ENCODE measurements at regions of chr1 and their contacts with region 1.

Region 1: DNA sequence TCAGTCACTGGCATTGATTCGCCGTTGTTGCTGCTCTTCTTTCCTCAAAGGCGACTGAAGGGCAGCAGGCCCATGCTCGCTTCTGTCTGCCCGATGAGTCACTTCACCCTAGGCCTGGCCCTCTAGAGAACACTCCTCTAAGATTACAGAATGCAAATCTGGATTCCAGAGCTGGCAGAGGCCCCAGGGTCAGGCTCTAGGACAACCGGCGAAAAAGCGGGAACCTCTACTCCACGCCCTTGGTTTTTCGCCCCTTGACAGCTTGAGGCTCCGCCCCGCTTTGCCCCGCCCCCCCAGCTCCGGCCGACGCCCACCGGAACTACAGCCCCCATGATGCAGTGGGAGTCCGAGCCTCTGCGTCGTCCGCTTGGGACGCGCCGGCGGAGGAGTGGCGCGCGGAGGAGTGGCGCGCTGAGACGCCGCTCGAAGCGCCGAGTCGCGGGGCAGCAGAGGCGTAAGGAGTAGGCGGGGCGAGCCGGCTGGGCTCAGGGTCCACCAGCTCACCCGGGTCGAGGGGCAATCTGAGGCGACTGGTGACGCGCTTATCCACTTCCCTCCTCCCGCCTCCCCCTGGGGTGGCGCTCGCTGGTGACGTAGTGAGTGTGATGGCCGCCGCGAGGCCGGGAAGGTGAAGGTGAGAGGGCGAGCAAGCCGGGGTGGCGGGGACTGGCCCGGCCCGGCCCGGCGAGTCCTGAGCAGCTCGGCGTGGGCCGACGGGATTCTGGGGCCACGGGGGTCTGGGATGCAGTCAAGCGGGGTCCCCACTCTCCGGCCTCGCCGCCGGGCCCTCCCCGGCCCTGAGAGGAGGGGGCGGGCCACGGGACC is at the start of gene MFN2:
- DNase-seq: peak; percentile 90
- H3K4me3 ChIP-seq: peak within 1 kb of the TSS; percentile 53 to 79
- H3K27ac ChIP-seq: peak within 1 kb of the TSS; percentile 89 to 91
- H3K4me1 ChIP-seq: peaks cover 13% of the 10 kb centered on the region
- H3K27me3 ChIP-seq: no peaks in the 10 kb centered on the region
- CTCF ChIP-seq: peak in 1 of 4 experiments; percentile 21
- POLR2A ChIP-seq: peak; percentile 57
- total RNA-seq, gene MFN2: 55.0 to 92.4 TPM

Region 2: DNA sequence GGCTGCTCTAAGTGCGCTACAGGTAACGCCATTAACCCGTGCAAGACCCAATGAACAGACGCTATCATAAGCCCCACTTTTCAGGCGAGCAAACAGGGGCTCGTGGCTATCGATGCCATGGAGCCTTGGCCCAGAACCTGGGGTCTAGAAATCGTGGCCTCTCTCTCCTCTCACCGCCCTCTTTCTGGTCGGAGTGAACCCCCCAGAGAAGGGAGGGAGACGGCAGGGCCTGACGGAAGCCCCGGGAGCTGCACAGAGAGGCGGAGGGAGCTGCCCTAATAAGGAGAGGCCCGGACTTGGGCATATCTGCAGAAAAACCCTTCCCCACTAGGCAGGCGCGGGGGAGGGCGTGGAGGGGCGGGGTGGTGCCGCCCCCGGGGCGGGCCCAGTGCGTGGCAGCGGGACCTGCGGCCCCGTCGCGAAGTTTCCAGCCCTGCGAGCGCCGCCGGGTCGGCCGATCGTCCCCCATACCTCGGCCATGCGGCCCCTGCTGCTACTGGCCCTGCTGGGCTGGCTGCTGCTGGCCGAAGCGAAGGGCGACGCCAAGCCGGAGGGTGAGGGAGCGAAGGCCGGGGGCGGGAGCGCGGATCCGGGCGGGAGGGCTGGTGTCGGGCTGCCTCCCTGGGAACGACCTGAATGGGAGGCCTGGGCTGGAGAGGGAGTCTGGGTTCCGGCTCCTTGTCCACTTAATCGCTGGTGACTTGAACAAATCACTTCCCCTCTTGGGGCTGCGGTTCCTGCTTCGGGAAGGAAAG is 45.6 kb before region 1 on chr1 and contains the start of gene PLOD1:
- intact Hi-C with region 1: loop called (anchors 5 kb)
- DNase-seq: peak; percentile 78
- H3K4me3 ChIP-seq: peak within 1 kb of the TSS; percentile 55 to 79
- H3K27ac ChIP-seq: peak within 1 kb of the TSS; percentile 72 to 90
- H3K4me1 ChIP-seq: no peaks in the 10 kb centered on the region
- H3K27me3 ChIP-seq: no peaks in the 10 kb centered on the region
- CTCF ChIP-seq: peak in 1 of 4 experiments; percentile 16
- POLR2A ChIP-seq: peak; percentile 81
- total RNA-seq, gene PLOD1: 73.6 to 80.2 TPM

Region 3: DNA sequence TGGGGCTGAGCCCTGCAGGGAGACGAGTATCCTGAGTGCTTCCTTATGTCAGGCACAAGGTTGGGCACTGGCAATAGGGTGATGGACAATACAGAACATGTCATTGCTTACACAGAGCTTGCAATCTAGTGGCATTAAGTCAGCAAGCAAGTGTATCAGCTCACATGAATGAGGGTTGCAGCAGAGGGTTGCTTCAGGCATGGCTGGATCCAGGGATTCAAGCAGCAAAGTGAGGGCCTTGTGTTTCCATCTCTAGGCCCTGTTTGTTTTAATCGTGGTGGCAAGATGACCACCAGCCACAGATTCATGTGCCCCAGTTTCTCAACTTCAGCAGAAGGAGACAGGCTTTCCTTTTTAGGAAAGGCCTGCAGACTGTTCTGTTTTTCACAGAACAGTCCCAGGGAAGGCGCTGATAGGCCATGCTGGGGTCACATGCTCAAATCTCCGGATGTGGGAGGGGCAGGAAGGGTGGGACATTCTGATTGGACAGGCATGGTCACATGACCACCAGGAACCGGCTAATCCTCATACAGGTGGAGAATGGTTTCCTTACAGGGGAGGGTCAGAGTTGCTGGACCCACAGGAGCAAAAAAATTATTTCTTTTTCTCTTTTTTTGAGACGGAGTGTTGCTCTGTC is 31.1 kb before region 1 on chr1:
- intact Hi-C with region 1: no loop called
- DNase-seq: no peak
- H3K4me3 ChIP-seq: no peak overlapping the region
- H3K27ac ChIP-seq: no peak overlapping the region
- H3K4me1 ChIP-seq: no peaks in the 10 kb centered on the region
- H3K27me3 ChIP-seq: no peaks in the 10 kb centered on the region
- CTCF ChIP-seq: no peak
- POLR2A ChIP-seq: no peak